ENCODE measurements at regions of chr1 and their contacts with region 1.

Region 1: DNA sequence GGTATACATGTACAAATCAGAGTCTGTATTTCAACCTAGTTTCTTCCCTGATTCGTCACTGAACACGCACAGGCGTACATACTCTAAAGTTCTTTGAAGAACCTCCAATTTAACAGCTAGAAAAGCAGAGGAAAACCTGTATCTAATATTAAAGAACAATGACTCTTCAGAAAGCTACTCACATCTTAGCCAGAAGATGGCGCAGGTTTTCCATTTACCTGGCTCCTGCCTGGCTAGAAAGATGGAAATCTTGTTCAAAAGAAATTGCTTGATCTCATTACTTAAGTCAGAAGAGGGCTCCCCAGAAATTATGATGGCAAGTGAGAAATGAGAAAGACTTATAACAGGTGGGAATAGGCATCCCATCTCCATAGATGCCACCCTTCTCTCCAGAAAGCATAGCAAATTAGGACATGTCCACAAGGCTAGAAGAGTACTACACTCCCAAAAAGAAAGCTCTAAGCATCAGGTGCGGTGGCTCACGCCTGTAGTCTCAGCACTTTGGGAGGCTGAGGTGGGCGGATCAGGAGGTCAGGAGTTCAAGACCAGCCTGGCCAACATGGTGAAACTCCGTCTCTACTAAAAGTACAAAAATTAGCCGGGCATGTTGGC is 19.0 kb upstream of the L1TD1 start:
- DNase-seq: peak; percentile 52 to 63 (median 60)
- ATAC-seq: peak; percentile 42
- H3K4me3 ChIP-seq: no peak overlapping the region
- H3K27ac ChIP-seq: no peak overlapping the region
- H3K4me1 ChIP-seq: peaks cover 5% of the 10 kb centered on the region
- H3K27me3 ChIP-seq: no peaks in the 10 kb centered on the region
- CTCF ChIP-seq: peak; percentile 64 to 89 (median 80)
- POLR2A ChIP-seq: no peak

Region 2: DNA sequence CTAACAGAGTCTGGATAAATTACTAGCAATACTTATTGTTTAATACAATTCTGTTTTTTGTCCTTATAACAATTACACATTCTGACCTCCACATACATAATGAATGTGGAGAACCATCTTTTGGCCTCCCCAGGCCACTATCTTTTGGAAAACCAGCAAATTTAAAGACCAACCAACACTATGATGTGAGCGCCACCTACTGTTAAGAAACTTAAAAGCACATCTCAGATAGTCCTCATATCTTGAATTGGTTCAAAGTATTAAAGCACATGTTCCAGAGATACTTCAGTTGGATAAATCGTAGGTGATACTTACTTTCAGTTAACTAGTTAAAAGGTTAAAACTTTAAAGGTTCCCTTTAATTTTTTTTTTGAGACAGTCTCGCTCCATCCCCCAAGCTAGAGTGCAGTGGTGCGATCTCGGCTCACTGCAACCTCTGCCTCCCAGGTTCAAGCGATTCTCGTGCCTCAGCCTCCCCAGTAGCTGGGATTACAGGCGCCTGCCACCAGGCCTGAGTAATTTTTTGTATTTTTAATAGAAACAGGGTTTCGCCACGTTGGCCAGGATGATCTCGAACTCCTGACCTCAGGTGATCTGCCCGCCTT is 231.8 kb after region 1 on chr1:
- intact Hi-C with region 1: loop called (anchors 5 kb)
- DNase-seq: peak in 1 of 4 donors; percentile 47
- ATAC-seq: peak; percentile 53
- H3K4me3 ChIP-seq: no peak overlapping the region
- H3K27ac ChIP-seq: no peak overlapping the region
- H3K4me1 ChIP-seq: no peaks in the 10 kb centered on the region
- H3K27me3 ChIP-seq: no peaks in the 10 kb centered on the region
- CTCF ChIP-seq: peak; percentile 54 to 88 (median 83)
- POLR2A ChIP-seq: no peak